ENCODE measurements at regions of chr9 and their contacts with region 1.

Region 1: GRCh38 chr9:17272536-17272935 is 137.7 kb downstream of the CNTLN start:
- DNase-seq: no peak
- H3K4me3 ChIP-seq: no peak overlapping the region
- H3K27ac ChIP-seq: no peak overlapping the region
- H3K4me1 ChIP-seq: no peaks in the 10 kb centered on the region
- H3K27me3 ChIP-seq: no peaks in the 10 kb centered on the region
- CTCF ChIP-seq: no peak

Region 2: GRCh38 chr9:16039218-16039987 is 1233.1 kb before region 1 on chr9:
- intact Hi-C with region 1: loop called (anchors 5 kb)
- DNase-seq: no peak
- H3K4me3 ChIP-seq: no peak overlapping the region
- H3K27ac ChIP-seq: no peak overlapping the region
- H3K4me1 ChIP-seq: peaks cover 0 to 10% (median 7%) of the 10 kb centered on the region in 4 donors
- H3K27me3 ChIP-seq: no peaks in the 10 kb centered on the region
- CTCF ChIP-seq: peak in 1 of 2 experiments; percentile 5

Region 3: DNA sequence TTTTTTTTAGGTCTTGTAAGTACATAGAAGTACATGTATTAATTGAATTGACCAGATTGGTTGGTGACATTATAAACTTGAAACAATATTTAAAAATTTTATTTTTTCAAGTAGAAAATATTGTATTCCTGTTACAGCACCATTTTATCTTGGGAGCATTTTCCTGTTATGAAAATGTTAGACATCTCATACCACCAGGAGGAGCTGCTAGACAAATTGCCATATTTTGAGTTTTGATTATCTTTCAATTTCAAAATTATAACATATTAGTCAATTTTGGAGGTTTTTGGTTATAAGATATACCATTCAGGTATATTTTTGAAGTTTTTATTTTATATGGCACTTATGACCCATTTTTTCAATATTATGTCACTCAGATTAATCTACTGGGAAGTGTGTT is 53.3 kb before region 1 on chr9:
- intact Hi-C with region 1: no loop called
- DNase-seq: no peak
- H3K4me3 ChIP-seq: no peak overlapping the region
- H3K27ac ChIP-seq: no peak overlapping the region
- H3K4me1 ChIP-seq: no peaks in the 10 kb centered on the region
- H3K27me3 ChIP-seq: no peaks in the 10 kb centered on the region
- CTCF ChIP-seq: no peak

Measured in tibial artery (tissue), 4 donors.